IMR-90 (cell line): ENCODE measurements at regions of chr17 and their contacts with region 1.

Region 1: DNA sequence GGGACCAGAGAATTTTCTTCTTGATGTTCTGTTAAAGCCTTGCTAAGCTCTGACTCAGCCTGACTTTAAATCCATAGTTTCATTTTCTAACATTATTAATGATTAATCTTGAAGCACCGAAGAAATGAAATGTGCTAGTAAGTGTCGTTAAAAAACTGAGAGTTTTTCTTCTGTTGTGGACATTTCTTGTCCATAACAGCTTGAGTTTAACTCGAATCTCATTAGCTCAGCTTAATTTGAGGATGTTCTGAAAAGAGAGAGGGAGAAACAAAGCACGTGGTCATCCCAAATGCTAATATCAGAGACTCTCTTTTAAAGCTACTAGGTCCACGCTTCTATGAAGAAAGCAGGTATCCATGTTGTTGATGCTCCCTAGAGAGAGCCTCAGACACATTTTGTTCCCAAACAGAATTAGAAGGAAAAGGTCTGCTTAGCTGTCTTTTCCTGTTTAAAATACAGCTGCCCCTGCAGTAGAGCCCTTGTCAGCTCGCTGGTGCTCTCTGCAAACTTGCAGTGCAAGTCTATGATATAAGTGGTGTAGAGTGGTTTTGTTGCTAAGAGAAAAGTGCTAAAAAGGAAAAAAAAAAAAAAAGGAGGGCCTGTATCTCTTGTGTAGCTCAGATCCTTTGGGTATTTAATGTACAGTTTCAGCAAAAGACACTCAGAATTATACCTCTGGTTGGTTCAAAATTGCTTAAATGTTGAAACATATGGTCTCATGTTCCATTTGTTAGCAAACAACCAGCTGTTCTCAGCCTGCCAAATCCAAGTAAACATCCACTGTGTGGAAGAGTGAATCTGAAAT is 191.1 kb upstream of the TBX2 start:
- DNase-seq: peak; percentile 64
- ATAC-seq: peak; percentile 67
- H3K4me3 ChIP-seq: peak overlapping the region; percentile 3; the same call in 1 of the 2 replicates
- H3K27ac ChIP-seq: peak overlapping the region; percentile 65; the same call in 1 of the 2 replicates
- H3K4me1 ChIP-seq: peaks cover 13% of the 10 kb centered on the region
- H3K27me3 ChIP-seq: no peaks in the 10 kb centered on the region
- CTCF ChIP-seq: no peak
- POLR2A ChIP-seq: no peak
- RAD21 ChIP-seq: no peak

Region 2: GRCh38 chr17:61018938-61019337 is 189.6 kb before region 1 on chr17:
- CTCF ChIA-PET with region 1: interaction called, 3 read pairs
- POLR2A ChIA-PET with region 1: interaction called, 10 read pairs
- dilution Hi-C with region 1: no loop called
- in situ Hi-C with region 1: no loop called
- intact Hi-C with region 1: no loop called
- DNase-seq: no peak
- ATAC-seq: no peak
- H3K4me3 ChIP-seq: no peak overlapping the region
- H3K27ac ChIP-seq: no peak overlapping the region
- H3K4me1 ChIP-seq: no peaks in the 10 kb centered on the region
- H3K27me3 ChIP-seq: no peaks in the 10 kb centered on the region
- CTCF ChIP-seq: no peak
- POLR2A ChIP-seq: no peak
- RAD21 ChIP-seq: no peak

Region 3: GRCh38 chr17:61072648-61073047 is 135.9 kb before region 1 on chr17:
- CTCF ChIA-PET with region 1: no interaction called
- POLR2A ChIA-PET with region 1: no interaction called
- dilution Hi-C with region 1: no loop called
- in situ Hi-C with region 1: no loop called
- intact Hi-C with region 1: no loop called
- DNase-seq: no peak
- ATAC-seq: peak; percentile 53
- H3K4me3 ChIP-seq: no peak overlapping the region
- H3K27ac ChIP-seq: no peak overlapping the region
- H3K4me1 ChIP-seq: peaks cover 4% of the 10 kb centered on the region
- H3K27me3 ChIP-seq: no peaks in the 10 kb centered on the region
- CTCF ChIP-seq: no peak
- POLR2A ChIP-seq: no peak
- RAD21 ChIP-seq: no peak